HCT116 (cell line): ENCODE measurements at regions of chr10 and their contacts with region 1.

Region 1: DNA sequence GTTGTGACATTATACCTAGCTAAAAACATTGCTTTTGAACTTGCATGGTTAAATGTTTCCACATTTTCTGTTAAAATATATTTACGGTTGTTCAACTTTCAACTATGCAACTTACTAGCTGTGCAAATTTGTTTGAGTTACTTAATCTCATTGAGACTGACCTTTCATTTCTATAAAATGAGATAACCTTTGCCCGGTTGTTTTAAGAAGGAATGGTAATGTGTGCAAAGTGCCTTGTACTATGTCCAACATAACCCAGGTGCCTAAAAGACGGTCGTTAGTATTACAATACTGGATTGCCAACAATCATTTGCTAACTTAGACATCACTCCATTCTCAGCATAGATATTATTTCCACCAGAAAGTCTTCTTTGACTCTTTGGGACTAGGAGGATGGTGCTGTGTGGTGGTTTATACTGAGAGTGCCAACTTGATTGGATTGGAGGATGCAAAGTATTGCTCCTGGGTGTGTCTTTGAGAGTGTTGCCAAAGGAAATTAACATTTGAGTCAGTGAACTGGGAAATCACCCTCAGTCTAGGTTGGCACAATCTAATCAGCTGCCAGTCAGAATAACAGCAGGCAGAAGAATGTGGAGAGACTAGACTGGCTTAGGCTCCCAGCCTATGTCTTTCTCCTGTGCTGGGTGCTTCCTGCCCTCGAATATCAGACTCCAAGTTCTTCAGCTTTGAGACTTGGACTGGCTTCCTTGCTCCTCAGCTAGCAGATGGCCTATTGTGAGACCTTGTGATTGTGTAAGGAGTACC is 85.2 kb upstream of the PDSS1 start:
- DNase-seq: no peak
- ATAC-seq: no peak
- H3K4me3 ChIP-seq: no peak overlapping the region
- H3K27ac ChIP-seq: no peak overlapping the region
- H3K4me1 ChIP-seq: no peaks in the 10 kb centered on the region
- H3K27me3 ChIP-seq: no peaks in the 10 kb centered on the region
- CTCF ChIP-seq: no peak
- POLR2A ChIP-seq: no peak
- RAD21 ChIP-seq: no peak

Region 2: DNA sequence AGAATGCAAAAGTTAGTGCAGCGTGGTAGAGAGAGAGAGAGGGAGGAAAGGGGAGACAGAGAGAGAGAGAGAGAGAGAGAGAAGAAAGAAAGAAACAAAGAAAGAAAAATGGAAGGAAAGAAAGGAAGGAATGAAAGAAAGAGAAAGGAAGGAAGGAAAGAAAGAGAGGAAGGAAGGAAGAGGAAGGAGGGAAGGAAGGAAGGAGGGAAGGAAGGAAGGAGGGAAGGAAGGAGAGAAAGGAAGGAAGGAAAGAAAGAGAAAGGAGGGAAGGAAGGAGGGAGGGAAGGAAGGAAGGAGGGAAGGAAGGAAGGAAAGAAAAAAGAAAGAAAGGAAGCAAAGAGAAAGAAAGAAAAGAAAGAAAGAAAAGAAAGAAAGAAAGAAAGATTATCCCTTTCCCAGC is 888.1 kb before region 1 on chr10:
- CTCF ChIA-PET with region 1: no interaction called
- POLR2A ChIA-PET with region 1: no interaction called
- RAD21 ChIA-PET with region 1: no interaction called
- intact Hi-C with region 1: no loop called
- DNase-seq: no peak
- ATAC-seq: no peak
- H3K4me3 ChIP-seq: no peak overlapping the region
- H3K27ac ChIP-seq: no peak overlapping the region
- H3K4me1 ChIP-seq: no peaks in the 10 kb centered on the region
- H3K27me3 ChIP-seq: peaks cover 8% of the 10 kb centered on the region; the same call in 1 of the 2 replicates
- CTCF ChIP-seq: no peak
- POLR2A ChIP-seq: no peak
- RAD21 ChIP-seq: no peak

Region 3: DNA sequence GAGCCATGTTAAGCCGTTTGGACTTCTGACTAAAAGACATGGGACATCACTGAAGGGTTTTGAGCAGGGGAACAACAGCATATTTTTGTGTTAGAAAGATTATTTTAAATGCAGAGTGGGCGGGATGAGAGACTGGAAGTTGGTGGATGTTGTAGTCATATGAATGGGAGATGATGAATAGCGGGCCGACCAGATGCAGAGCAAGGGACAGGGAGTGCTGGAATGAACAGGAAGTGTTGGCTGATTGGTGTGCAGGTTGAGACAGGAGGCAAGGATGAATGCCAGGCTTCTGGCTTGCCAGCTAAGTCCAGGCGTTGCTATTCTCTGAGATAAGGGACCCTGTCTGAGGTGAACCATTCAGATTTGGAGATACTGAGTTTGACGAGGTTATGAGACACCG is 357.7 kb before region 1 on chr10:
- CTCF ChIA-PET with region 1: no interaction called
- POLR2A ChIA-PET with region 1: no interaction called
- RAD21 ChIA-PET with region 1: no interaction called
- intact Hi-C with region 1: no loop called
- DNase-seq: no peak
- ATAC-seq: no peak
- H3K4me3 ChIP-seq: no peak overlapping the region
- H3K27ac ChIP-seq: no peak overlapping the region
- H3K4me1 ChIP-seq: no peaks in the 10 kb centered on the region
- H3K27me3 ChIP-seq: peaks cover 21% of the 10 kb centered on the region
- CTCF ChIP-seq: no peak
- POLR2A ChIP-seq: no peak
- RAD21 ChIP-seq: no peak

Region 4: DNA sequence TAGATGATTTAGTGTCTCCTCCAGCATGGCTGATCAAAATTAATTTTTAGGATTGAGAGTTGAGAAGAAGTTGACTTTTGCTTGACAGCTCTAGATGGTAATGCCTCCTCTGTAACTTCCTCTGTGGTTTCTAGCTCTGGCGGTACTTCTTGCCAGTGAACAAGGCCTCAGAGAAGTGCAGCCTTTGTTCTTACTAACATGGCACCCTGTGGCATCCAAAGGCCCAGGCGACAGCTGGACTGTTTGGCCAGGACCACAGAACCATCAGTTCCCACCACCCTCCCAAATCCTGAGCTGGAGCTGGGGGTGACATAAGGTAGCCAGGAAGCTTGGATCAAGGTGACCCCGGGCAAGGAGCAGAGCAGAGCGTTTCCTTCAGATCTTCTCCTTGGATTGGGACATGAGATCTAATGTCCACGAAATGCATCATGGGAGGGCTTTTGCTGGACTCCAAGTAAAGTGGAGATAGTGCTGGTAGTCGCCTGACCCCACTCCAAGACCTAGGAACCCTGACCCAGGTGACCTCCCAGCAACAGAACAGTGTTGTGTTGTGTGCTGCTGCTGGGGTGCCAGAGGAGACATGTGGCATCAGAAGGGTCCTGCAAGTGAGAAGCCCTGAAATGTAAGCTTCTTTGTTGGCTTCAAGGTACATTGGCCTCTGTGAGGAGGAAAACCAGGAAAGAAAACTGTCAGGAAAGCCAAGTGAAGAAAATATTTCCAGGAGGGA is 132.4 kb before region 1 on chr10:
- CTCF ChIA-PET with region 1: no interaction called
- POLR2A ChIA-PET with region 1: no interaction called
- RAD21 ChIA-PET with region 1: no interaction called
- intact Hi-C with region 1: no loop called
- DNase-seq: no peak
- ATAC-seq: no peak
- H3K4me3 ChIP-seq: no peak overlapping the region
- H3K27ac ChIP-seq: no peak overlapping the region
- H3K4me1 ChIP-seq: no peaks in the 10 kb centered on the region
- H3K27me3 ChIP-seq: no peaks in the 10 kb centered on the region
- CTCF ChIP-seq: no peak
- POLR2A ChIP-seq: no peak
- RAD21 ChIP-seq: no peak

Region 5: GRCh38 chr10:26682931-26683330 is 70.6 kb after region 1 on chr10:
- CTCF ChIA-PET with region 1: no interaction called
- POLR2A ChIA-PET with region 1: no interaction called
- RAD21 ChIA-PET with region 1: no interaction called
- intact Hi-C with region 1: no loop called
- DNase-seq: no peak
- ATAC-seq: no peak
- H3K4me3 ChIP-seq: no peak overlapping the region
- H3K27ac ChIP-seq: no peak overlapping the region
- H3K4me1 ChIP-seq: peaks cover 0 to 6% of the 10 kb centered on the region in 2 experiments; a peak in 2 of 4 replicates
- H3K27me3 ChIP-seq: no peaks in the 10 kb centered on the region
- CTCF ChIP-seq: no peak
- POLR2A ChIP-seq: no peak
- RAD21 ChIP-seq: no peak

Region 6: GRCh38 chr10:26697163-26697921 is 85.0 kb after region 1 on chr10 and contains the start of gene PDSS1:
- CTCF ChIA-PET with region 1: no interaction called
- POLR2A ChIA-PET with region 1: no interaction called
- RAD21 ChIA-PET with region 1: no interaction called
- intact Hi-C with region 1: loop called (anchors 10 kb)
- DNase-seq: peak; percentile 28
- ATAC-seq: peak; percentile 89
- H3K4me3 ChIP-seq: peak within 1 kb of the TSS; percentile 76 to 95
- H3K27ac ChIP-seq: peak within 1 kb of the TSS; percentile 94
- H3K4me1 ChIP-seq: peaks cover 5 to 18% of the 10 kb centered on the region in 2 experiments; a peak in 3 of 4 replicates
- H3K27me3 ChIP-seq: no peaks in the 10 kb centered on the region
- CTCF ChIP-seq: no peak
- POLR2A ChIP-seq: no peak
- RAD21 ChIP-seq: no peak
- total RNA-seq, gene PDSS1: 23.5 TPM